CD4-positive, alpha-beta memory T cell (primary cell): ENCODE measurements at regions of chr5 and their contacts with region 1.

Region 1: DNA sequence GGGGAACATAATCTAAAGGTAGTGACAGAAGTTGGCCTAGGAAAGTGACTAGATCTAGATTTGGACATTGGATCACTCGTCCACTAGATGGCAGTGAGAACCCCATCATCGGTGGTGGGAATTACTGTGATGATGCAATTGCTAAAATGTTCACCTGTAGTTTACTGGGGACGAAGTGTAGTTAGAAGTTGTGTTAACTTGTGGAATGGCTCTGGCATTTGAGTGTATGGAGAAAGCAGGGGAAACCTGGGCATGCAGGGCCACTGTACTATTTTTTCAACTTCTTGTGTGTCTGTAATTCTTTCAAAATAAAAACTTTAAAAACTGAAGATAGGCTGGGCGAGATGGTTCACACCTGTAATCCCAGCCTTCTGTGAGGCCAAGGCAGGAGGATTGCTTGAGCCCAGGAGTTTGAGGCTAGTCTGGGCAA is 75.5 kb downstream of the PHAX start:
- DNase-seq: peak; percentile 65 to 74 (median 72)
- H3K4me3 ChIP-seq: no peak overlapping the region
- H3K4me3 Mint-ChIP-seq: no peak overlapping the region
- H3K27ac ChIP-seq: no peak overlapping the region
- H3K27ac Mint-ChIP-seq: peak overlapping the region in 2 of 7 donors; percentile 2 to 31
- H3K4me1 ChIP-seq: no peaks in the 10 kb centered on the region
- H3K4me1 Mint-ChIP-seq: peaks cover 3 to 5% (median 4%) of the 10 kb centered on the region in 4 donors
- H3K27me3 ChIP-seq: no peaks in the 10 kb centered on the region
- H3K27me3 Mint-ChIP-seq: no peaks in the 10 kb centered on the region

Region 2: DNA sequence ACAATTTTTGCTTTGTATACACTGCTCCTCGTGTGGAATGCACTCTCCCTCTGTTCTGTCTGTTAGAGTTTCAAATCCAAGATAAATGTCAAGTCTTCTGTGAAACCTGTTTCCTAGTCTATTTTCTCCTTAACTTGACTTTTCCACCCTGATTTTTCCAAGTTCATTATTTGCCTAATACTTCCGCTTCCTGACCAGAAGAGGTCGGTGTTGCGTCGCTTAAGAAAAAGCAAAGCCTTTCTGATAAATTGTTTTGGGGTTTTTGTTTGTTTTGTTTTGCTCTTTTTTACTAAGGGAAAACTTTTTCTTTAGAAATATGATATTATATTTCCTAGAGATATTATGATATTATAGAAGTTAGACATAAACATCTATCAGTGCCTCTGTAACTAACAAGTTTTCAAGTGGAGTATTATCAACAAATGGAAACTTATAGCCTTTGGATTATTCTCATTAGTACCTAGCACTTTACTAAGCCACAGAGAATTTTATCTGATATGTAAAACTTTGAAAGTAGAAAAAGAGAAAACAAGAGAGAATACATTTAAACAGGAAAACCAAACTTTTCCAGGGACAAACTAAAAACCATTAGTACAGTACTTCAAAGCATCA is 19.7 kb before region 1 on chr5:
- CTCF ChIA-PET with region 1: interaction called, 6 read pairs
- POLR2A ChIA-PET with region 1: no interaction called
- intact Hi-C with region 1: loop called (anchors 1 kb)
- DNase-seq: peak in 4 of 5 donors; percentile 22 to 31 (median 26)
- H3K4me3 ChIP-seq: no peak overlapping the region
- H3K4me3 Mint-ChIP-seq: no peak overlapping the region
- H3K27ac ChIP-seq: no peak overlapping the region
- H3K27ac Mint-ChIP-seq: peak overlapping the region in 2 of 7 donors; percentile 1 to 53
- H3K4me1 ChIP-seq: no peaks in the 10 kb centered on the region
- H3K4me1 Mint-ChIP-seq: no peaks in the 10 kb centered on the region
- H3K27me3 ChIP-seq: peaks cover 4% of the 10 kb centered on the region
- H3K27me3 Mint-ChIP-seq: peaks cover 1 to 2% of the 10 kb centered on the region in 2 donors

Region 3: DNA sequence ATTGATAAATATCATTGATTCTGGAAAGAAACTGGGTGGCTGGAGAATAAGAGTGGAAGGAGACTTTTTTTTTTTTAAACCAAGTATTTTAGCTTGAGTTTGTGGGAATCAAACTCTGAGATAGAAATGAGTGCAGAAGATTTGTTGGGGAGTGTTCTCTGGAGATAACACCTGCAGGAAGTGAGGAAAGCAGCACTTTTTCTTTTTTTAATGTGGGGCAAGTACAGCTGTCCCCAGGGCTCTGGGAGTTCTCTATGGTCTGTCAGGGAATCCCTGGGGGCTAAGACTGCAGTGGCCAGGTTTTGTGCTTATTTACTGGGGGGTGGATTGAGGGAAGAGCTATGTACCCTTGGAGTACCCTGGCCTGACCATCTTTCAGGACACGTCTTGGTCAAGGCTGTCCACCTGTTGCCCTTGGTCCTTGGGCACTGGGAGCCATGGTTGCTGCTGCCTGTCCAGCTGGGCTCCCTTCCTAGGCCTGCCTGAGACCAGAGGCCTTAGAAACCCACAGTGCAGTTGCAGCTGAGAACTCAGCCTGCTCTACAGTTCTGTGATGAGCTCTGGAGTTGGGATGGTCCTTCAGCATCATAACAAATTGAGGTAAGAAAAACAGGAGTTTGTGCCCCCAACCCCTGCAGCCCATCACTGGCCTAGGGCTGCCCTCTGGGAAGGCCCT is 10.4 kb after region 1 on chr5:
- CTCF ChIA-PET with region 1: interaction called, 35 read pairs
- POLR2A ChIA-PET with region 1: no interaction called
- intact Hi-C with region 1: no loop called
- DNase-seq: no peak
- H3K4me3 ChIP-seq: no peak overlapping the region
- H3K4me3 Mint-ChIP-seq: no peak overlapping the region
- H3K27ac ChIP-seq: no peak overlapping the region
- H3K27ac Mint-ChIP-seq: no peak overlapping the region
- H3K4me1 ChIP-seq: no peaks in the 10 kb centered on the region
- H3K4me1 Mint-ChIP-seq: peaks cover 0 to 6% (median 3%) of the 10 kb centered on the region in 4 donors
- H3K27me3 ChIP-seq: no peaks in the 10 kb centered on the region
- H3K27me3 Mint-ChIP-seq: peaks cover 2 to 6% of the 10 kb centered on the region in 2 donors

Region 4: GRCh38 chr5:126808521-126808988 is 132.3 kb after region 1 on chr5:
- CTCF ChIA-PET with region 1: interaction called, 51 read pairs
- POLR2A ChIA-PET with region 1: no interaction called
- intact Hi-C with region 1: loop called (anchors 1 kb)
- DNase-seq: peak in 4 of 5 donors; percentile 21 to 40 (median 30)
- H3K4me3 ChIP-seq: no peak overlapping the region
- H3K4me3 Mint-ChIP-seq: no peak overlapping the region
- H3K27ac ChIP-seq: no peak overlapping the region
- H3K27ac Mint-ChIP-seq: peak overlapping the region in 2 of 7 donors; percentile 1 to 33
- H3K4me1 ChIP-seq: peaks cover 25% of the 10 kb centered on the region
- H3K4me1 Mint-ChIP-seq: peaks cover 27 to 36% (median 30%) of the 10 kb centered on the region in 4 donors
- H3K27me3 ChIP-seq: no peaks in the 10 kb centered on the region
- H3K27me3 Mint-ChIP-seq: no peaks in the 10 kb centered on the region

Region 5: GRCh38 chr5:127229185-127229889 is 553.1 kb after region 1 on chr5:
- CTCF ChIA-PET with region 1: no interaction called
- POLR2A ChIA-PET with region 1: no interaction called
- intact Hi-C with region 1: loop called (anchors 5 kb)
- DNase-seq: peak; percentile 54 to 64 (median 59)
- H3K4me3 ChIP-seq: peak overlapping the region in 1 of 2 donors; percentile 78
- H3K4me3 Mint-ChIP-seq: peak overlapping the region; percentile 55 to 88 (median 80)
- H3K27ac ChIP-seq: peak overlapping the region; percentile 45
- H3K27ac Mint-ChIP-seq: peak overlapping the region; percentile 45 to 87 (median 82)
- H3K4me1 ChIP-seq: peaks cover 16% of the 10 kb centered on the region
- H3K4me1 Mint-ChIP-seq: peaks cover 15 to 24% (median 18%) of the 10 kb centered on the region in 4 donors
- H3K27me3 ChIP-seq: no peaks in the 10 kb centered on the region
- H3K27me3 Mint-ChIP-seq: no peaks in the 10 kb centered on the region

Region 6: DNA sequence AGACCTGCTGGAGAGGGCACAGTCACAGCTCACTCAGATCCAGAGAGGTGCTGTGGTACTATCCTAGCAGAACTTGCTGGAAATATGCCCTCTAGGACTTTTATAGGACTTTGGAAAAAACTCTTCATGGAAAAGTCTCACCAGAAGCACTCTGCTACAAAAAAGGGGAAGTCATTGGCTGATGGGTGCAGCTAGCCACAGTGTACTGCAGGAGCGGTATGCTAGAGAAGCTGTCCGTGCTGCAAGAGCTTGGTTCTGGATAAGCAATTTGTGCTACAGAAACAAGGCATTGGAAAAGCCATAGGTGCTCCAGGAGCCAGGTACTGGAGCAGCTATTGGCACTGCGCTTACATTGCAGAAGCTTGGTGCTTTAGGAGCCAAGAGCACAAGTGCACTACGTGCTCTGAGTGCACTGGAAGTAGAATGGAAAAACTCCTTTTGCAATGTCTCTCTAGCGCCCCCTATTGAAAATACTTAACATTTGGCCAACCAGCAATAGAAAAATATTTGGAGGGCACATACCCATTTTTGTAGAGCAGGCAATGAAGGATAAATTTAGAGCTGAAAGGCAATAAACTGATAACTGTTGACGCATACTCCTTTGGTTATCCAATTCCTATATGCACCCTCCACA is 697.8 kb after region 1 on chr5:
- CTCF ChIA-PET with region 1: no interaction called
- POLR2A ChIA-PET with region 1: no interaction called
- intact Hi-C with region 1: no loop called
- DNase-seq: no peak
- H3K4me3 ChIP-seq: no peak overlapping the region
- H3K4me3 Mint-ChIP-seq: no peak overlapping the region
- H3K27ac ChIP-seq: no peak overlapping the region
- H3K27ac Mint-ChIP-seq: no peak overlapping the region
- H3K4me1 ChIP-seq: no peaks in the 10 kb centered on the region
- H3K4me1 Mint-ChIP-seq: no peaks in the 10 kb centered on the region
- H3K27me3 ChIP-seq: no peaks in the 10 kb centered on the region
- H3K27me3 Mint-ChIP-seq: peaks cover 3 to 5% of the 10 kb centered on the region in 2 donors

Region 7: GRCh38 chr5:127492854-127493738 is 816.9 kb after region 1 on chr5:
- CTCF ChIA-PET with region 1: no interaction called
- POLR2A ChIA-PET with region 1: no interaction called
- intact Hi-C with region 1: loop called (anchors 5 kb)
- DNase-seq: peak in 4 of 5 donors; percentile 38 to 54 (median 50)
- H3K4me3 ChIP-seq: no peak overlapping the region
- H3K4me3 Mint-ChIP-seq: no peak overlapping the region
- H3K27ac ChIP-seq: no peak overlapping the region
- H3K27ac Mint-ChIP-seq: no peak overlapping the region
- H3K4me1 ChIP-seq: no peaks in the 10 kb centered on the region
- H3K4me1 Mint-ChIP-seq: peaks cover 0 to 2% (median 0%) of the 10 kb centered on the region in 4 donors
- H3K27me3 ChIP-seq: no peaks in the 10 kb centered on the region
- H3K27me3 Mint-ChIP-seq: peaks cover 9 to 17% of the 10 kb centered on the region in 2 donors